ENCODE measurements at regions of chr9 and their contacts with region 1.

Region 1: GRCh38 chr9:15211160-15211814 is 95.7 kb downstream of the TTC39B start:
- DNase-seq: no peak
- H3K4me3 ChIP-seq: no peak overlapping the region
- H3K27ac ChIP-seq: no peak overlapping the region
- H3K4me1 ChIP-seq: peaks cover 0 to 12% (median 6%) of the 10 kb centered on the region in 6 donors
- H3K27me3 ChIP-seq: no peaks in the 10 kb centered on the region
- CTCF ChIP-seq: peak; percentile 53 to 90 (median 83)
- POLR2A ChIP-seq: no peak

Region 2: GRCh38 chr9:15306757-15307534 is 95.7 kb after region 1 on chr9 and contains the start of gene TTC39B:
- intact Hi-C with region 1: loop called (anchors 10 kb)
- DNase-seq: peak; percentile 98
- H3K4me3 ChIP-seq: peak within 1 kb of the TSS; percentile 65 to 92 (median 84)
- H3K27ac ChIP-seq: peak within 1 kb of the TSS; percentile 75 to 91 (median 86)
- H3K4me1 ChIP-seq: peaks cover 17 to 46% (median 33%) of the 10 kb centered on the region in 6 donors
- H3K27me3 ChIP-seq: no peaks in the 10 kb centered on the region
- CTCF ChIP-seq: peak in 1 of 11 experiments; percentile 29
- POLR2A ChIP-seq: peak in 1 of 3 donors; percentile 32
- total RNA-seq, gene TTC39B: 16.8 to 24.1 (median 19.6) TPM

Region 3: DNA sequence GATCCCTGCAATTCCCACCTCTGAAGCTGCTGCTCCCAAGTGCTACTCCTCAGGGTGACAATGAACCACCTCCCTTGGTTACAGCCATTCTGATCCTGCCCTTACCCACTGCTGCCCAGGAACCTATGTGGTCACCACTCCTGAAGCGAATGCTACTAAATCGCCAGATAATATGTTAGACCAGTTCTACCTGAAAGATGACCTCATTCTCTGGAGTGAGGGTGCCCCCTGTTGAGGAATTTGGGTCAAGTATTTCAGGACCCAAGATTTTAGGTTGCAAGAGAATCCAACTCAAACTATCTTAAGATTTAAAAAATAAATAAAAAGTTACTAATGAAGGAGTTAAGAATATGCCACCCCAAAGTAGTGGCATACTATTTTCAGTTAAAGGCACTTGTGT is 205.6 kb after region 1 on chr9:
- intact Hi-C with region 1: loop called (anchors 10 kb)
- DNase-seq: no peak
- H3K4me3 ChIP-seq: no peak overlapping the region
- H3K27ac ChIP-seq: no peak overlapping the region
- H3K4me1 ChIP-seq: peaks cover 0 to 5% (median under 1%) of the 10 kb centered on the region in 6 donors
- H3K27me3 ChIP-seq: no peaks in the 10 kb centered on the region
- CTCF ChIP-seq: peak in 7 of 11 experiments; percentile 20 to 43 (median 33)
- POLR2A ChIP-seq: no peak

Region 4: GRCh38 chr9:15485836-15486666 is 274.8 kb after region 1 on chr9:
- intact Hi-C with region 1: loop called (anchors 10 kb)
- DNase-seq: no peak
- H3K4me3 ChIP-seq: no peak overlapping the region
- H3K27ac ChIP-seq: no peak overlapping the region
- H3K4me1 ChIP-seq: peaks cover 0 to 16% (median 0%) of the 10 kb centered on the region in 6 donors
- H3K27me3 ChIP-seq: no peaks in the 10 kb centered on the region
- CTCF ChIP-seq: peak in 7 of 11 experiments; percentile 10 to 33 (median 29)
- POLR2A ChIP-seq: no peak

Region 5: DNA sequence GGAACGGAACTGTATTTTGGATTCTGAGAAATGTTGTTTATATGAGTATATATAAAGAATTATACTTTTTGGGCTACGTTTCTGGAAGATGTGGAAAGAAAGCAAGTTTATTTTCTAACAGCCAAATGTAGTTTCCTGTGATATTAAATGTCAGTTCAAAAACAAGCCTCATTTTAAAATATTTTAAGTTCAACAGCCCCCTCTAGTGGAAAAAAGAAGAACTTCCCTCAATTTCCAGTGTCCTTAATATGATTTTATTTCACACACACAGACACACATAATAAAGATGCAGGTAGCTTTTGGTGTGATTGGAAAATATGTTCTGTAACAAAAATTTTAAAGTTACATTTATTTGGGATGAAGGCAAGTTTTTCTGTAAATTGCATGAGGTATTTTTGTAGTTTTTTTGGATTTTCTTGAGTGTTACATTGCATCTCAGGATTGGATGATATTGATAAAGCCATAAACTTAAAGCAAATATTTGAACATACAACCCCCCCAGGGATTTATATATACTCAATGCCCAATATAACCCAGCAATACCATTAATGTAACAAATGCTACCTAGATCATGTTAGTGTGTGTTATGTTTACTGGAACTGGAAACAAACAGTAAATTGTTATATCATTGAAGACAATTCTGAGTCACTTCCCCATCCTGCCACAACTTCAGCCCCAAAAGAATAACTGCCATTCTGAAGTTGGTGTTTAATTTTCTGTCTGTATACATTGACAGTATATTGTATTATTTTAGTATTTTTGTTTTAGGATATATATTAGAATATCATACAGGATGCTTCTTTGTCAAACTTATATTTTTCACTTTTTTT is 395.6 kb after region 1 on chr9:
- intact Hi-C with region 1: loop called (anchors 5 kb)
- DNase-seq: no peak
- H3K4me3 ChIP-seq: no peak overlapping the region
- H3K27ac ChIP-seq: no peak overlapping the region
- H3K4me1 ChIP-seq: peaks cover 0 to 7% (median 0%) of the 10 kb centered on the region in 6 donors
- H3K27me3 ChIP-seq: no peaks in the 10 kb centered on the region
- CTCF ChIP-seq: peak; percentile 61 to 87 (median 78)
- POLR2A ChIP-seq: no peak

Region 6: DNA sequence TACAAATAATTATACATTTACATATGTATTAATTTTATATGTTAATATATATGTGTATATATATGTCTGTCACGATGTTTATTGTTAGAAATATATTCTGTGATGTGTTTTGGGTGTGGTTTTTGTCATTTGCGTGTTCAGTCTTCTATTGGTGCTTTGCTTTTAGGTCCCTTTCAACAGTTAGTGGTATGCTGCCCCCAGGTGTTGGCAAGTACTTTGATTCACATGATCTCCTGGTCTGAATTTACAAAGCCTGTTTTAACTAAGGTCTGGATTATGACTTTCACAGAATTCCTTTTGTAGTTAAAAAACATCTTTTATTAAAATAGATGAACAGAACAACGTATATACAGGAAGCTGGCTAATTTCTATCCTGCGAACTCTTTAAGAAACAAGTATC is 613.0 kb after region 1 on chr9:
- intact Hi-C with region 1: no loop called
- DNase-seq: no peak
- H3K4me3 ChIP-seq: no peak overlapping the region
- H3K27ac ChIP-seq: no peak overlapping the region
- H3K4me1 ChIP-seq: no peaks in the 10 kb centered on the region
- H3K27me3 ChIP-seq: no peaks in the 10 kb centered on the region
- CTCF ChIP-seq: no peak
- POLR2A ChIP-seq: no peak

Measured in spleen (tissue), 13 donors.